RWPE1 (cell line): ENCODE measurements at regions of chr7 and their contacts with region 1.

Region 1: DNA sequence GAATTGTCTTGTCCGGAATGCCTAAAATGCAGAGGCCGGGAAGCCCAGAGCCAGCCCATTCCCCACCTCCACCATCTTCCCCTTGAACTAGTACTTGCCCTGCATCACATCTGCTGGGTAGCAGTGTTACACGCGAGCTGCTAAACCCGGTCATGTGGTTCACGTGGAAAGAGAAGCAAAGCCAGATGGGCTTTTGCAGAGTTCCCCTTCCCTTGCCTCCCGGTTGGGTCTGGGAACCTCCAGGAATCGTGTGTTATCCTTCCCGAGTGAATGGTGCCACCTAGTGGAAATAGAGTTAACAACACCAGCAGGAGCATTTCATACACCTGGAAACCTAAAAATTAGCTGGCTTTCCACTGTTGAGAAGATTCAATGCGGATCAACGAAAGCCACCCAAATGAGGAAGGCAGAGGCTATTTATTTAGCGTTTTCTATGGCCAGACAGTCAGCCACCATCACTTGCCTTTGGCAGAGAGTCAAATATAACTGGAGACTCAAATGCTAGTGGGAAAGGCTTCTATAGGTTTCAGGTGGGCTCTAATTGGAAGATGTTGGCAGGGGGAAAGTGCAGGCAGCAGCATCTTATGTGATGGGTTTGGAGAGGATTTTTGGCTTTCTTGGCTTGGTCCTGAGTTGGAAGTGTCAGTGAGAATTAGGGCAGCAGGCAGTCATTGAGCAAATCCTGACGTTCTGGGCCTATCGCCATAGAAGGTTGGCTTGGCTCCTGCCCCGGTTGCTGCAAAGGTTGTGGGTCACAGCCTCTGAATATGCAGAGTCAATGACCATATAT is 12.9 kb upstream of the DENND2A start:
- DNase-seq: peak; percentile 67
- H3K27ac ChIP-seq: no peak overlapping the region
- CTCF ChIP-seq: peak; percentile 96

Region 2: GRCh38 chr7:140390466-140391190 is 262.9 kb before region 1 on chr7:
- CTCF ChIA-PET with region 1: no interaction called
- POLR2A ChIA-PET with region 1: no interaction called
- DNase-seq: no peak
- H3K27ac ChIP-seq: no peak overlapping the region
- CTCF ChIP-seq: no peak

Region 3: GRCh38 chr7:140517546-140518369 is 135.8 kb before region 1 on chr7:
- CTCF ChIA-PET with region 1: interaction called, 31 read pairs
- POLR2A ChIA-PET with region 1: no interaction called
- DNase-seq: peak; percentile 69
- H3K27ac ChIP-seq: no peak overlapping the region
- CTCF ChIP-seq: peak; percentile 93

Region 4: GRCh38 chr7:140638173-140638791 is 15.2 kb before region 1 on chr7:
- CTCF ChIA-PET with region 1: no interaction called
- POLR2A ChIA-PET with region 1: no interaction called
- DNase-seq: no peak
- H3K27ac ChIP-seq: no peak overlapping the region; the same call in 1 of the 2 replicates
- CTCF ChIP-seq: no peak

Region 5: DNA sequence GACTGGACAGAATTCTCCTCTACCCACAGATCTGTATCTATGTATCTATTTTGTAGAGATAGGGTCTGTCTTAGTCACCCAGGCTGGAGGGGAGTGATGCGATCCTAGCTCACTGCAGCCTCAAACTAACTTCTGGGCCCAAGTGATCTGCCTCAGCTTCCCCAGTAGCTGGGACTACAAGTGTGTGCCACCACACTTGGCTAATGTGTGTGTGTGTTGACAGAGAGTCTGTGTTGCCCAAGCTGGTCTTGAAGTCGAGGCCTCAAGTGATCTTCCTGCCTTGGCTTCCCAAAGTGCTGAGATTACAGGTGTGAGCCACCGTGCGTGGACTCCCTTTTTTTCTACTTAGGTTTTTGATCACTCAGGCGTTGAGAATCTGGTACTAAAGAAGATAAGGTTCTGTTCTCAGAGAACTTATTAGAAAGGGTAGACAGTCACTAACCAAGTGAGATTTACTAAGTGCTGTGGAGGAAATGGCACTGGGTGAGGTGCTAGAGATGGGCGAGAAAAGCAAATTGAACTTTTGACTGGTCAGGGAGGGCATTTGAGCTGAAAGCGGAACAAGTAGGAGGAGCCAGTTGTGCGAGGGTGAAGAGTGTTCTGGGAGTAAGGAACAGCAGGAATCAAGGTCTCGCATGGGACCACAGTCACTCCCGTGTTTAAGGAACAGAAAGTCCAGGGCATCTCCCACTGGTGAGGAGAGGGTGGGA is 61.0 kb after region 1 on chr7:
- CTCF ChIA-PET with region 1: no interaction called
- POLR2A ChIA-PET with region 1: no interaction called
- DNase-seq: no peak
- H3K27ac ChIP-seq: no peak overlapping the region
- CTCF ChIP-seq: no peak

Region 6: GRCh38 chr7:141167381-141167964 is 514.0 kb after region 1 on chr7:
- CTCF ChIA-PET with region 1: no interaction called
- POLR2A ChIA-PET with region 1: no interaction called
- DNase-seq: no peak
- H3K27ac ChIP-seq: no peak overlapping the region
- CTCF ChIP-seq: no peak